K562 (cell line): ENCODE measurements at regions of chr13 and their contacts with region 1.

Region 1: DNA sequence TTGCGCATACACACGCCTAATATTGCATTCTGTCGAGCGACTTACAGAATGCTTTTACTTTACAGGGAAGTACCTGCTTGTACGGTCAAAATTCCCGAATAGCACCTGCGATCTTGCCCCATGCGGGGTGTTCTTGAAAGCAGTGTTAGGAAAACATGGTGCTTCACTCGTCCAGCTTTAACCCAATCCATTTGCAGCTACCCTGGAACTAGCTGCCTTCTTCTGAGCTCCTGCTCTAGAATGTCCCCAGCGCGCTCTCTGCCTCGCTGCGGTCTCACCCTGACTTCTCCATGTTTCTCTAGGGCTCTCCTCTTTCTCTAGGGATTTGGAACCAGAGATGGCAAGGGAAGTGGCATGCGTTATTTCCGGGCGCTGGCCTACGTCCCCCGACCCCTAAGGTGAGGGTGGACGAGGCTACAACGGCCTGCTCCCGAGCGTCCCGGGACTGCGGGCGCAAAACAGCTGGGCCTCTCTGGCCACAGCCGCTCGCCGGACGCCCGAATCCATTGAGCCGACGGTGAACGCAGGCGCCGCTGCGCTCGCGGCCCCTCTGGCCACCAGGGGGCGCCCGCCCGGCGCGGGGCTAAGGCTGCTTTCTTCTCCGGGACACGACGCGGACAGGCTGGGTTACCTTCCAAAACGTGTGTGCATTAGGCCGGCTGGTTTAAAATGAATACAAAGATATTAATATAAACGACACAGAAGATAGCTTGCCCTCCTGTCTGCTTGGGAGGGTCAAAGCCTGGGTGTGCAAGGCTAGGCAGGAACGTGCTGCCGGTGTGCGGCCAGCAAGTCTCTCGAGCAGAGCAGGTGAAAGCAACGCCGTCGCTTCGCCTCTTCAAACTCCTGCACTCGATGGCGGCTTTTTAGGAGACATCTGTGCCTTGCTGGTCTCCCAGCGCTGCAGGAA is 1.8 kb upstream of the SPRY2 start:
- DNase-seq: peak; percentile 59 to 84 (median 62)
- ATAC-seq: peak; percentile 69
- H3K4me3 ChIP-seq: peak overlapping the region; percentile 31
- H3K27ac ChIP-seq: peak overlapping the region; percentile 56; the same call in 1 of the 3 replicates
- H3K4me1 ChIP-seq: peaks cover 3 to 23% of the 10 kb centered on the region in 2 experiments; a peak in 3 of 5 replicates
- H3K27me3 ChIP-seq: no peaks in the 10 kb centered on the region
- CTCF ChIP-seq: peak; percentile 79 to 90 (median 88)
- EP300 ChIP-seq: no peak
- POLR2A ChIP-seq: no peak
- RAD21 ChIP-seq: peak; percentile 70 to 77

Region 2: DNA sequence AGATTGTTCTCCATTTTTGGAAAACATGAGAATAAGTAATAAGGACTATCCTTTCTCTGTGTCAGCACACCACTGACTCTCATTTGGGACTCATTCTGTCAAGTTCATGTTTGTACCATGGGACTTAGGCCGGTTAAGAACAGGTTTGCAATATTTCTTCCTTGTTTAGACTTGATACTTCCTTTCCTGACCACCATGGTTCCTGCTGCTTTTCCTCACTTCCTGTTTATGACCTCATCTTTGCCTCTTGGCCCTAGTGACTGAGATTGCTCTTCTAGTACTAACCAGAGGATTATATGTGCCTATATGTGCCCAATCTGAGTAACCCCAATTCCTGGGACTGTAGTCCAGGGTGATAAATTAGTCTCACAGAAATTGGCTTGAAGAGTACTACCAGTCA is 894.3 kb before region 1 on chr13:
- CTCF ChIA-PET with region 1: no interaction called
- POLR2A ChIA-PET with region 1: no interaction called
- in situ Hi-C with region 1: loop called (anchors 25 kb)
- intact Hi-C with region 1: no loop called
- DNase-seq: peak in 1 of 4 experiments; percentile 15
- ATAC-seq: no peak
- H3K4me3 ChIP-seq: no peak overlapping the region
- H3K27ac ChIP-seq: no peak overlapping the region
- H3K4me1 ChIP-seq: peaks cover 0 to 13% of the 10 kb centered on the region in 2 experiments; a peak in 3 of 5 replicates
- H3K27me3 ChIP-seq: no peaks in the 10 kb centered on the region
- CTCF ChIP-seq: no peak
- EP300 ChIP-seq: no peak
- POLR2A ChIP-seq: no peak
- RAD21 ChIP-seq: no peak

Region 3: GRCh38 chr13:80265348-80265747 is 77.4 kb before region 1 on chr13:
- CTCF ChIA-PET with region 1: no interaction called
- POLR2A ChIA-PET with region 1: no interaction called
- in situ Hi-C with region 1: no loop called
- intact Hi-C with region 1: no loop called
- DNase-seq: no peak
- ATAC-seq: no peak
- H3K4me3 ChIP-seq: no peak overlapping the region
- H3K27ac ChIP-seq: no peak overlapping the region
- H3K4me1 ChIP-seq: no peaks in the 10 kb centered on the region
- H3K27me3 ChIP-seq: no peaks in the 10 kb centered on the region
- CTCF ChIP-seq: no peak
- EP300 ChIP-seq: no peak
- POLR2A ChIP-seq: no peak
- RAD21 ChIP-seq: no peak

Region 4: GRCh38 chr13:80363890-80364503 is 21.3 kb after region 1 on chr13:
- CTCF ChIA-PET with region 1: no interaction called
- POLR2A ChIA-PET with region 1: no interaction called
- in situ Hi-C with region 1: no loop called
- intact Hi-C with region 1: loop called (anchors 1 kb)
- DNase-seq: peak in 2 of 4 experiments; percentile 21 to 28
- ATAC-seq: no peak
- H3K4me3 ChIP-seq: no peak overlapping the region
- H3K27ac ChIP-seq: no peak overlapping the region
- H3K4me1 ChIP-seq: peaks cover 0 to 34% of the 10 kb centered on the region in 2 experiments; a peak in 3 of 5 replicates
- H3K27me3 ChIP-seq: no peaks in the 10 kb centered on the region
- CTCF ChIP-seq: peak; percentile 36 to 67 (median 56); a peak in 5 of 6 replicates
- EP300 ChIP-seq: no peak
- POLR2A ChIP-seq: no peak
- RAD21 ChIP-seq: peak; percentile 48 to 66

Region 5: GRCh38 chr13:80408270-80408669 is 65.5 kb after region 1 on chr13:
- CTCF ChIA-PET with region 1: no interaction called
- POLR2A ChIA-PET with region 1: no interaction called
- in situ Hi-C with region 1: no loop called
- intact Hi-C with region 1: loop called (anchors 2 kb)
- DNase-seq: peak in 2 of 4 experiments; percentile 6 to 34
- ATAC-seq: peak; percentile 90
- H3K4me3 ChIP-seq: no peak overlapping the region
- H3K27ac ChIP-seq: no peak overlapping the region
- H3K4me1 ChIP-seq: no peaks in the 10 kb centered on the region
- H3K27me3 ChIP-seq: no peaks in the 10 kb centered on the region
- CTCF ChIP-seq: peak; percentile 22 to 46 (median 42); a peak in 2 of 6 replicates
- EP300 ChIP-seq: no peak
- POLR2A ChIP-seq: no peak
- RAD21 ChIP-seq: peak; percentile 11 to 39; a peak in 1 of 4 replicates